CD4-positive, alpha-beta T cell (primary cell): ENCODE measurements at regions of chr10 and their contacts with region 1.

Region 1: DNA sequence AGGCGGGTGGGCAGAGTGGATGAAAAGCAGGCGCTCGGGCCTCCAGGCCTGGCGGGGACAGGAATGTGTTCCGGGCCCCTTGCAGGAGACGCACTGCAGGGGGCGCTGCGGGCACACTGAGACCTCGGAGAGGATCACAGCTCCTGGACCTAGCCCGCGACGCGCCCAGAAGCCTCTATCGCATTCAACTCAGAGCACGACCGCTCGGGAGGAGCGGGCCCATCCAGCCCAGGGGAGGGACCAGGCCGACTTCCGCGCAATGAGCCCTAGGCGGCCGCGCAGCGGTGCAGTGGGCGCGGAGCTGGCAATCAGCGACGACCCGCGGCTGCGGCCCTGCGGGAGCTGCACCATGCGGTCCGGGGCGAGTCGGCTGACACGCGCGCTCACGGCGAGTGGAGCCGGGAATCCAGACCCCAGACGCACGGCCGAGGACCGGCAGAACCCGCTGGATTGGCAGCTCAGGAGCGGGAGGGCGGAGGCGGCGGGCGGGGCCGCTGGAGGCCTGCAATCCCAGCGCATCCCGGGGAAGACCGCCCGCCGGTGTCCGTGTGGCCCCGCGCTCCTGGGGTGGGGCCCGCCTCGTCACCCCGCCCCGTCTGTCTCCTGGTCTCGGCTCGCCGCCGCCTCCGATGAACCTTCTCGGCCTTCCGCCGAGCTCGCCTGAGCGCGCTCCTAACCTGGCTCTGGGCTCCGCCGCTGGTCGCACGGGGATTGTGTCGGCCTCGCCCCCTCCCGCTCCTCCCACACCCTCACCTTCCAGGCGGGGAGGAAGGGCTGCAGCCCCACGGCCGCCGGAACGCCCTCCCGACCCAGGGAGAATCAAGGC is 33.5 kb upstream of the GRID1 start:
- DNase-seq: peak; percentile 90 to 98 (median 93)
- ATAC-seq: peak; percentile 79
- H3K4me3 ChIP-seq: peak overlapping the region; percentile 88
- H3K4me3 Mint-ChIP-seq: peak overlapping the region; percentile 88
- H3K27ac ChIP-seq: peak overlapping the region; percentile 63 to 72
- H3K27ac Mint-ChIP-seq: peak overlapping the region; percentile 90
- H3K4me1 ChIP-seq: peaks cover 30% of the 10 kb centered on the region
- H3K4me1 Mint-ChIP-seq: peaks cover 28% of the 10 kb centered on the region
- H3K27me3 ChIP-seq: no peaks in the 10 kb centered on the region
- H3K27me3 Mint-ChIP-seq: no peaks in the 10 kb centered on the region
- CTCF ChIP-seq: peak; percentile 90

Region 2: DNA sequence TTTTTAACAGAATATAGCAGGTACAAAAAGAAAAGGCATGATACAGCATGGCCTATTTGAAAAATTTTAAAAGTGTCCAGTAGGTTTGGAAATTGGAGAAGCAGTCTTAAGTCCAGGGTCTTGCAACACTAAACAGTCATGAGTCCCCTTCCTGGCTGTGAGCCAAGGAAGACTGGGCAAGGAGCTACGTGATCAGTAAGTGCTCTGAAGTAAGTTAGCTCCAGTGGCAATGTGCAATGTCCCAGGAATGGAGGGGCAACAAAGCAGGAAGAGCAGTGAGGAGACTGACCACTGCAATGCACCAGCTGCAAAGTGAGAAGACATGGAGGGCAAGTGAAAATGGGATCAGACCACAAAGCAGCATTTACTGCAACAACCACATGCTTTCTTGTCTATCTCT is 39.5 kb after region 1 on chr10:
- CTCF ChIA-PET with region 1: interaction called, 3 read pairs
- POLR2A ChIA-PET with region 1: interaction called, 11 read pairs
- intact Hi-C with region 1: loop called in 1 of 2 experiments (anchors 5 kb)
- DNase-seq: peak in 2 of 14 experiments; percentile 56 to 61
- ATAC-seq: no peak
- H3K4me3 ChIP-seq: no peak overlapping the region
- H3K4me3 Mint-ChIP-seq: no peak overlapping the region
- H3K27ac ChIP-seq: no peak overlapping the region
- H3K27ac Mint-ChIP-seq: peak overlapping the region; percentile 68
- H3K4me1 ChIP-seq: no peaks in the 10 kb centered on the region
- H3K4me1 Mint-ChIP-seq: peaks cover 21% of the 10 kb centered on the region
- H3K27me3 ChIP-seq: no peaks in the 10 kb centered on the region
- H3K27me3 Mint-ChIP-seq: no peaks in the 10 kb centered on the region
- CTCF ChIP-seq: no peak

Region 3: GRCh38 chr10:86461963-86462804 is 62.1 kb after region 1 on chr10:
- CTCF ChIA-PET with region 1: interaction called, 4 read pairs
- POLR2A ChIA-PET with region 1: interaction called, 11 read pairs
- intact Hi-C with region 1: no loop called
- DNase-seq: no peak
- ATAC-seq: no peak
- H3K4me3 ChIP-seq: no peak overlapping the region
- H3K4me3 Mint-ChIP-seq: no peak overlapping the region
- H3K27ac ChIP-seq: no peak overlapping the region
- H3K27ac Mint-ChIP-seq: no peak overlapping the region
- H3K4me1 ChIP-seq: no peaks in the 10 kb centered on the region
- H3K4me1 Mint-ChIP-seq: no peaks in the 10 kb centered on the region
- H3K27me3 ChIP-seq: no peaks in the 10 kb centered on the region
- H3K27me3 Mint-ChIP-seq: no peaks in the 10 kb centered on the region
- CTCF ChIP-seq: no peak

Region 4: DNA sequence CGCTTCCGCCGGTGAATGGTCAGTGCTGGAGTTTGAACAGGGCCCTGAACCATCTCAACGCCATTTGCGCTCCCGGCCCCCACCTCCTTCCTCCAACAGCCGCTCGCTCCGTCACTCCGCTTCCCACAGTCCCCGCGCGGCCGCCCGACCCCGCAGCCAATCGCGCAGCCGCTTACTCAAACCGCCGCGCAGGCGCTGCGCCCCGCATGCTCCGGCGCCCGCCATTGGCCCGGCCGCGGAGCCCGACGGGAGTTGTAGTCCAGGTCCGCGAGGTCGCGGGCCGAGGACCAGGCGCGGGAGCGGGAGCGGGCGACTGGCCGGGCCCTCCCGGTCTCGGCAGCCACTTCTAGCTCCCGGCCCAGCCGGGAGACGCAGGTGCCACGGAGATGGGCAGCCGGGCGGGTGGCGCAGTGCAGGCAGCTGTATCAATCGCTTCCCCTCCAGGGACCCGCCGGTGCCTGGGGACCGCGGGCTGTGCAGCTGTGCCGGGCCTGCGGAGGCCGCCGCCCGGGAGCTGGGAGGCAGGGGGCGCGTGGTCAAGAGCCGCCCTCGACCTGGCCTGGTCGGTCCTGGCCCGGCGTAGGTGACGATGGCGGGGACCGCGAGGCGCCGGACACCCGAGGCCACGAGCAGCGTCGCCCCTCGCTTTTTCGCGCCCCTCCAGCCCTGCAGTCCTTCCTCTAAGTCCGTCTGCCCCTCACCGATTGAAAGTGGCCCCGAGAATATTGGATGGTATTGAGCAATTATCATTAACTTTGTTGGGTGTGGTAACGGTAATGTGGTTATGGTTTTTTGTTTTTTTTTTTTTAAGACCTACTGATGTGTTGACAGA is 121.8 kb after region 1 on chr10 and contains the start of gene WAPL:
- CTCF ChIA-PET with region 1: interaction called, 5 read pairs
- POLR2A ChIA-PET with region 1: interaction called, 22 read pairs
- intact Hi-C with region 1: loop called (anchors 1 kb)
- DNase-seq: peak; percentile 88 to 97 (median 91)
- ATAC-seq: peak; percentile 94
- H3K4me3 ChIP-seq: peak within 1 kb of the TSS; percentile 92
- H3K4me3 Mint-ChIP-seq: peak within 1 kb of the TSS; percentile 98
- H3K27ac ChIP-seq: peak within 1 kb of the TSS; percentile 68 to 83
- H3K27ac Mint-ChIP-seq: peak within 1 kb of the TSS; percentile 92
- H3K4me1 ChIP-seq: peaks cover 29% of the 10 kb centered on the region
- H3K4me1 Mint-ChIP-seq: peaks cover 70% of the 10 kb centered on the region
- H3K27me3 ChIP-seq: no peaks in the 10 kb centered on the region
- H3K27me3 Mint-ChIP-seq: no peaks in the 10 kb centered on the region
- CTCF ChIP-seq: no peak
- total RNA-seq, gene WAPL: 34.3 TPM

Region 5: GRCh38 chr10:86710987-86711512 is 311.0 kb after region 1 on chr10:
- CTCF ChIA-PET with region 1: no interaction called
- POLR2A ChIA-PET with region 1: interaction called, 9 read pairs
- intact Hi-C with region 1: loop called in 1 of 2 experiments (anchors 5 kb)
- DNase-seq: peak; percentile 68 to 93 (median 82)
- ATAC-seq: peak; percentile 95
- H3K4me3 ChIP-seq: peak overlapping the region; percentile 67
- H3K4me3 Mint-ChIP-seq: peak overlapping the region; percentile 95
- H3K27ac ChIP-seq: peak overlapping the region; percentile 78 to 81
- H3K27ac Mint-ChIP-seq: peak overlapping the region; percentile 95
- H3K4me1 ChIP-seq: peaks cover 17% of the 10 kb centered on the region
- H3K4me1 Mint-ChIP-seq: peaks cover 20% of the 10 kb centered on the region
- H3K27me3 ChIP-seq: no peaks in the 10 kb centered on the region
- H3K27me3 Mint-ChIP-seq: no peaks in the 10 kb centered on the region
- CTCF ChIP-seq: peak; percentile 77